Dendritic cell treated with granulocyte-macrophage colony-stimulating factor and Interleukin-4, amounts not matched to agents 40 ng/mL and 50 ng/mL, for 4 days (primary cell): ENCODE measurements at regions of chr16 and their contacts with region 1.

Region 1: DNA sequence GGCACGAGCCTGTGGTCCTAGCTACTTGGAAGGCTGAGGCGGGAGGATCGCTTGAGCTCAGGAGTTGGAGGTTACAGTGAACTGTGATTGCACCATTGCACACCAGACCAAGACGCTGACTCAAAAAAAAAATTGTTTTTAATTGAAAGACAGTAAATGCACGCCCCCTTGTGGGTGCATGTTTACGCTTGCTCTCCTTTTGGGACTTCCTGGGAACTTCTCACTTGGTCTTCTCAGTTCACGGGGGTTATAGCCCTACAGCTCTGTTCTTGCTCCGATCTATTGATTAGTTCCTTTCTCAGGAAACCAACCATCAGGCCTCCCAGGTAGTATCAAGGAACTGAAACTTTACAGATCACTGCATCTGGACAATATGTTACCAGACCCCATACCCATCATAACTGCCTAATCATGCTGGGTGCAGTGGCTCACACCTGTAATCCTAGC is 14.2 kb upstream of the RIPOR1 start:
- H3K4me3 Mint-ChIP-seq: no peak overlapping the region
- H3K27ac Mint-ChIP-seq: no peak overlapping the region
- H3K4me1 Mint-ChIP-seq: peaks cover 44% of the 10 kb centered on the region
- H3K27me3 Mint-ChIP-seq: peaks cover 2% of the 10 kb centered on the region

Region 2: DNA sequence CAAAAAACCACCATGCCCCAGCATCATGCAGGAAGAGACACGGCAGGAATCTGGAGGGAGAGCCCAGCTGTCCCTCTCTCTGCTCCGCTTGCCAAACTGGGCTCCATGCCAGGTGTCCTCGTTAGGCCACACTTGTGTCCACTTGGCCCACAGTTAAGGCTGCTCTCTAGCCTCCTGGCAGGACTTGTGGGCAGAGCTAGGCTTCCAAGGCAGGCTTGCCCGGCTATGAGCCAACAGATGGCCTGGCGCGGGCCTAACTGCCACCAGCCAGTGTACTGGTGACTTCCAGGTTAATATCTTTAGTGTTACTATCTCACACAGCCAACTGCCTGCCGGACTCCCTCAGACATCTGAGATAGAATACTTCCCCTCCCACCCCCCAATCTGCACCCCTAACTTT is 44.0 kb before region 1 on chr16:
- intact Hi-C with region 1: no loop called
- H3K4me3 Mint-ChIP-seq: no peak overlapping the region
- H3K27ac Mint-ChIP-seq: peak overlapping the region; percentile 0
- H3K4me1 Mint-ChIP-seq: peaks cover 92% of the 10 kb centered on the region
- H3K27me3 Mint-ChIP-seq: no peaks in the 10 kb centered on the region

Region 3: GRCh38 chr16:67480833-67481560 is 33.4 kb before region 1 on chr16 and contains the start of gene ATP6V0D1:
- intact Hi-C with region 1: loop called (anchors 5 kb)
- H3K4me3 Mint-ChIP-seq: peak within 1 kb of the TSS; percentile 100
- H3K27ac Mint-ChIP-seq: peak within 1 kb of the TSS; percentile 100
- H3K4me1 Mint-ChIP-seq: peaks cover 68% of the 10 kb centered on the region
- H3K27me3 Mint-ChIP-seq: no peaks in the 10 kb centered on the region

Region 4: DNA sequence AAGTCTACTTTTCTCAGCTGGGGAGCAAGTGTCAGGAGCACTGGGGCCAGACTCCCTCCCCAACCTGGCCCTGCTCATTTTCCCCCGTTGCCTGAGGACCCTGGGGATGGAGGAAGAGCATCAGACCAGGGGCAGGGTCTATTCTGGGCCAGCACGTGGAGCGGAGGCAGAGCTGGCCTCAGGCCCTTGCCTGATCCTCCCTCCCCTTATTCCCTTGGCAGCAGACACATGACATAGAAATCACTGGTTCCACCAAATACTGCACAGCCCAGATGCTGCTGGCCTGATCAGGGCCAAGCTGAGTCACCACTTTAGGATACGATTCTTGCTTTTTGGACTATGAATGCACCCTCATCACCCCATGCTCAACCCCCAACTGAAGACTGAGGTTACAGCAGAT is 15.3 kb before region 1 on chr16:
- intact Hi-C with region 1: loop called (anchors 1 kb)
- H3K4me3 Mint-ChIP-seq: no peak overlapping the region
- H3K27ac Mint-ChIP-seq: peak overlapping the region; percentile 38
- H3K4me1 Mint-ChIP-seq: peaks cover 21% of the 10 kb centered on the region
- H3K27me3 Mint-ChIP-seq: no peaks in the 10 kb centered on the region